Heart left ventricle (tissue), 16 donors: ENCODE measurements at regions of chr19 and their contacts with region 1.

Region 1: DNA sequence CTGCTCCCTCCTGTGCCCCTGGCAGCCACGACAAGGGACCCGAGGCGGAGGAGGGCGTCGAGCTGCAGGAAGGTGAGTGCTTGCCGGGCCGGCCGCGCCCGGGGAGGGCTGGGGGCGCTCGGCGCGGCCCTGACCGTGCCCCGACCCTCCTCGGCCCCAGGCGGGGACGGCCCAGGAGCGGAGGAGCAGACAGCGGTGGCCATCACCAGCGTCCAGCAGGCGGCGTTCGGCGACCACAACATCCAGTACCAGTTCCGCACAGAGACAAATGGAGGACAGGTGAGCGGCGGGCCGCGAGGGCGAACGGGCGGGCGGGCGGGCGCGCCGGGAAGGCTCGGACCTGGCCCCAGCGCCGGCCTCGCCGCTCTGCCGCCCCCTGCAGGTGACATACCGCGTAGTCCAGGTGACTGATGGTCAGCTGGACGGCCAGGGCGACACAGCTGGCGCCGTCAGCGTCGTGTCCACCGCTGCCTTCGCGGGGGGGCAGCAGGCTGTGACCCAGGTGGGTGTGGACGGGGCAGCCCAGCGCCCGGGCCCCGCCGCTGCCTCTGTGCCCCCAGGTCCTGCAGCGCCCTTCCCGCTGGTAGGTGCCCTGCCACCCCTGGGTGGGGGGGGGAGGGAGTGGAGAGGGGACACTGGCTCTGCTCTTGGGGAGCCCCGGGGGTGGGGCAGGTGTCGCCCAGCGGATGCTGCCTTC is 807 bp downstream of the USF2 start:
- DNase-seq: peak; percentile 84 to 93 (median 89)
- ATAC-seq: peak; percentile 42 to 60 (median 58)
- H3K4me3 ChIP-seq: peak overlapping the region; percentile 40 to 97 (median 86)
- H3K27ac ChIP-seq: peak overlapping the region; percentile 80 to 99 (median 94)
- H3K4me1 ChIP-seq: peaks cover 3 to 60% (median 29%) of the 10 kb centered on the region in 12 donors
- H3K27me3 ChIP-seq: no peaks in the 10 kb centered on the region
- CTCF ChIP-seq: peak; percentile 61 to 93 (median 84)
- POLR2A ChIP-seq: no peak

Region 2: DNA sequence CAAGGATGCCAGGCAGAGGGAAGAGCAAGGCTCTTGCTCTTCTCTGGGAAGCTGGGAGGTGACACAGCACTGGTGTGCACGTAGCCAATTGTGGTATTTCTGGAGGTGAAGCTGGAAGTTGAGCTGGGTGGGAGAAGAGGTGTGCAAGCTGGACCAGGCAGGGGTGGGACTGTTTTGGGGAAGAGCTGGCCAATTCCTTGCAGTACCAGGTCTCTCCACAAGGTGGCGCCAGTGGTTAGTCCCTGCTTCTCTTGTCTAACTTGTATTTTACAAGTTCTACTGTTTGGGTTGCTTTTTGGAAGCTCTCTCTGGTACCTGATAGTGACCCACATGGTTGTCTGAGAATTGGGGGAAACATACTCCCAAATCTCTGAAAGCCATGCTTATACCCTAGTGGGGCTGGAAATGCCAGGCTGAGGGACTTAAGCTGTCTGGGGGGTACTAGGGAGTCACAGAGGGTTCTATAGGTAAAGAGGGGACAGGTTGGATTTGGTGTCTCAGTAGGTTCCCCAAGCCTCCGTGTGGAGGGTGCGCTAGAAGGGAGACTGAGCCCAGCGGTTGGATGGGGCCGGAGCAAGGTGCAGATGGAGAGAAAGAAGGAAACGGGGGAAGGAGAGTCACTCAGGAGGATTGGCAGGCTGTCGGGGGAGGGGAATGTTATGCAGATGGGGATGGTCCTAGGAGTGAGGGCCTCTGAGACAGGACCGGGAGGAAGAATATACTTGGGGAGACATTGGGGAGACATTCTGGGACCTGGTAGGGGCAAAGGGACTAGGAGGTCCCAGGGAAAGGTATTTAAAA is 225.1 kb before region 1 on chr19:
- intact Hi-C with region 1: loop called in 1 of 10 experiments (anchors 10 kb)
- DNase-seq: peak in 3 of 5 donors; percentile 49 to 55 (median 54)
- ATAC-seq: no peak
- H3K4me3 ChIP-seq: no peak overlapping the region
- H3K27ac ChIP-seq: no peak overlapping the region
- H3K4me1 ChIP-seq: peaks cover 0 to 47% (median 29%) of the 10 kb centered on the region in 12 donors
- H3K27me3 ChIP-seq: no peaks in the 10 kb centered on the region
- CTCF ChIP-seq: peak; percentile 90 to 99 (median 96)
- POLR2A ChIP-seq: no peak

Region 3: GRCh38 chr19:35140962-35141637 is 128.5 kb before region 1 on chr19:
- intact Hi-C with region 1: loop called in 7 of 10 experiments (anchors 2 to 10 kb)
- DNase-seq: peak; percentile 90 to 97 (median 94)
- ATAC-seq: peak; percentile 61 to 78 (median 65)
- H3K4me3 ChIP-seq: peak overlapping the region in 11 of 12 donors; percentile 7 to 71 (median 58)
- H3K27ac ChIP-seq: peak overlapping the region in 11 of 12 donors; percentile 29 to 100 (median 96)
- H3K4me1 ChIP-seq: peaks cover 0 to 57% (median 39%) of the 10 kb centered on the region in 12 donors
- H3K27me3 ChIP-seq: peaks cover 0 to 23% (median 0%) of the 10 kb centered on the region in 9 donors
- CTCF ChIP-seq: peak in 10 of 12 donors; percentile 15 to 62 (median 36)
- POLR2A ChIP-seq: peak; percentile 59 to 81

Region 4: DNA sequence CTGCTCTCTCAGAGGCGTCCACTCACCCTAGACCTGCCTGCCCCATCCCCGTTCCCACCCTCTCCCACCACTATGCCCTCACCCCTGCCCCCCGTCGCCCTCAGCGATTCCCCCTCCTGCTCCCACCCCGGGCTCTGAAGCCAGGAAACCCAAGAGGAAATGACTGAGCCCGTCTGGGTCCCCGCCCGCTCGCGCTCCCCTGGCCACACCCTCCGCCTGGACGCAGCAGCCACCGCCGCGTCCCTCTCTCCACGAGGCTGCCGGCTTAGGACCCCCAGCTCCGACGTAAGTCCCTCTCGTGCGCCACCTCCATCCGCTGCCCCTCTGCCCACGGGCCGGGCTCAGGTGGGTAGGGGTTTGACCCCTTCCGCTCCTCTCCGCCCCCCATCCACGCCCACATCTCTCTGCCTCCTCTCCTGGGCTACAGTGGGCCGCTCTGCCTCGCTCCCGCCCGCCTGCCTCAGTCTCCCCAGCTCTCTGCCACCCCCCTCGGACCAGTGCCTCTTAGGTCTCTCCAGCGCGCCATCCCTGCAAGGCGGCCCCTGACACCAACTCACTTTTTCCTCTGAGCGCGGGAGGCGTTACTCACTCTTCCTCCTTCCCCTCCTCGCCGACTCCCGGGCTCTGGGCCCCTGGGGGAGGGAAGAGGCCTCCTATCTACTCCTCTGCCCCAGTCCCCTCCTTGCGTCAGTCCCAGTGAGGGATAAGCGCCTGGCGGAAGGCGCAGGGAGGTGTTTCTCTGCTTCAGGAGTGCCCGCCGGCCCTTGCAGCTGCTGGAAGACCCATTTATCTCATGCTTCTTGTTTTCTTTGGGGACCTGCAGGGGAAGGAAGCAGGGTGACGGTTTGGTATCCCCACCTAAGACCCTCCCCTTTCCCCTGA is 114.8 kb before region 1 on chr19 and contains the start of gene FXYD5:
- intact Hi-C with region 1: loop called in 3 of 10 experiments (anchors 5 to 10 kb)
- DNase-seq: peak; percentile 75 to 85 (median 81)
- ATAC-seq: peak; percentile 65 to 95 (median 89)
- H3K4me3 ChIP-seq: peak within 1 kb of the TSS; percentile 63 to 97 (median 74)
- H3K27ac ChIP-seq: peak within 1 kb of the TSS; percentile 68 to 91 (median 79)
- H3K4me1 ChIP-seq: peaks cover 0 to 34% (median 18%) of the 10 kb centered on the region in 12 donors
- H3K27me3 ChIP-seq: peaks cover 0 to 30% (median 4%) of the 10 kb centered on the region in 9 donors
- CTCF ChIP-seq: peak in 1 of 12 donors; percentile 10
- POLR2A ChIP-seq: peak in 1 of 2 donors; percentile 50
- total RNA-seq, gene FXYD5: 15.3 to 87.9 (median 19.5) TPM

Region 5: DNA sequence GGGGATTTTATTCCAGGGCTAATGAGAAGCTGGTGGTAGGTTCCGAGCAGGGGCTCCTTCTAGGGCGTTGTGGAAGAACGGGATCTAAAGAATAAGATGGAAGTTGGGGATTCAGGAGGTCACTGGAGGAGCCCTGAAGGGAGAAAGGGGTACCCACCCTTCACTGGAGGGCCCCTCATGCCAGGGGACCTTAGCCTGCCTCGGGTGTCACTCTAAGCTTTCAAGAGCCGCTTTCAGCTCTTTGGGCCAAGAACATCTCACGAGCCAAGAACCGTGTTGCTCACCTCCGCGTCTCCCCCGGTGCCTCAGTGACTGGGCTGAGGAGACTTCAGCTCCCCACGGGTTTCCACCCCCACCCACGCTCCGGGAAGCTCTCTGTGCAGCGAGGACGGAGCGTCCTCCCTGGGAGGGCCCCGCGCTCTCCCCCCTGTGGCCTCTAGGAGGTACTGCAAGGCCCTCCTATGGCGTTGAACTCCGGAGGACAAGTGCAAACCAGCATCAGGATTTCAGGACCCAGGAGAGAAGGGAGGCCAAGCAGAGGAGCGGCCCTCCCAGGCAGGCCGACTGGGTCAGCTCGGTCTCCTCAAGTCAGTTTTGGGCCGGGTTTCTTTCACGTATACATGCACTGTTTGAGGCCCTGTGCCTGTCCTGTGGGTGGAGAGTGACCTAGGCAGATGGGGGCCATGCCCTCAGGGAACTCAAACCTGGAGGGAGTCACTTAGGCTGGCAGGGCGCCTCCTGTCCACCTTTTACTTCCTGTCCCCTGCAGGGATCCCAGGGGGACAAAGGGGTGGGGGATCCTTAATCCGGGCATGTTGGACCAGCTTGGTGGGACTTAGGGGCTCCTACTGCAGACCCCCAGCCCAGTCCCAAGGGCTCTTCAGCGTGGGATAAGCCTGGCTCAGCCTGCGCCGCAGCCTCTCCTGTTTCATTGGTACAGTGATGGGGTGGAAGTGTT is 225.8 kb after region 1 on chr19:
- intact Hi-C with region 1: loop called in 3 of 10 experiments (anchors 5 kb)
- DNase-seq: peak; percentile 61 to 88 (median 71)
- ATAC-seq: peak; percentile 81 to 94 (median 90)
- H3K4me3 ChIP-seq: peak overlapping the region in 1 of 12 donors; percentile 26
- H3K27ac ChIP-seq: no peak overlapping the region
- H3K4me1 ChIP-seq: peaks cover 0 to 7% (median 2%) of the 10 kb centered on the region in 12 donors
- H3K27me3 ChIP-seq: peaks cover 0 to 3% (median 0%) of the 10 kb centered on the region in 9 donors
- CTCF ChIP-seq: peak; percentile 96 to 99 (median 98)
- POLR2A ChIP-seq: no peak